ENCODE measurements at regions of chr10 and their contacts with region 1.

Region 1: GRCh38 chr10:88880282-88881076 is 434 bp downstream of the STAMBPL1 start:
- DNase-seq: peak; percentile 77
- ATAC-seq: peak; percentile 71
- H3K4me3 Mint-ChIP-seq: peak overlapping the region; percentile 96
- H3K27ac Mint-ChIP-seq: peak overlapping the region; percentile 99
- H3K4me1 Mint-ChIP-seq: peaks cover 52% of the 10 kb centered on the region
- H3K27me3 Mint-ChIP-seq: no peaks in the 10 kb centered on the region
- CTCF ChIP-seq: no peak

Region 2: GRCh38 chr10:88892222-88892967 is 11.9 kb after region 1 on chr10:
- CTCF ChIA-PET with region 1: interaction called, 5 read pairs
- POLR2A ChIA-PET with region 1: interaction called, 294 read pairs
- intact Hi-C with region 1: loop called (anchors 1 kb)
- DNase-seq: no peak
- ATAC-seq: no peak
- H3K4me3 Mint-ChIP-seq: no peak overlapping the region
- H3K27ac Mint-ChIP-seq: no peak overlapping the region
- H3K4me1 Mint-ChIP-seq: peaks cover 61% of the 10 kb centered on the region
- H3K27me3 Mint-ChIP-seq: no peaks in the 10 kb centered on the region
- CTCF ChIP-seq: no peak

Region 3: GRCh38 chr10:88926566-88927415 is 46.3 kb after region 1 on chr10:
- CTCF ChIA-PET with region 1: interaction called, 6 read pairs
- POLR2A ChIA-PET with region 1: interaction called, 33 read pairs
- intact Hi-C with region 1: loop called (anchors 2 kb)
- DNase-seq: no peak
- ATAC-seq: no peak
- H3K4me3 Mint-ChIP-seq: no peak overlapping the region
- H3K27ac Mint-ChIP-seq: no peak overlapping the region
- H3K4me1 Mint-ChIP-seq: peaks cover 5% of the 10 kb centered on the region
- H3K27me3 Mint-ChIP-seq: no peaks in the 10 kb centered on the region
- CTCF ChIP-seq: no peak

Region 4: DNA sequence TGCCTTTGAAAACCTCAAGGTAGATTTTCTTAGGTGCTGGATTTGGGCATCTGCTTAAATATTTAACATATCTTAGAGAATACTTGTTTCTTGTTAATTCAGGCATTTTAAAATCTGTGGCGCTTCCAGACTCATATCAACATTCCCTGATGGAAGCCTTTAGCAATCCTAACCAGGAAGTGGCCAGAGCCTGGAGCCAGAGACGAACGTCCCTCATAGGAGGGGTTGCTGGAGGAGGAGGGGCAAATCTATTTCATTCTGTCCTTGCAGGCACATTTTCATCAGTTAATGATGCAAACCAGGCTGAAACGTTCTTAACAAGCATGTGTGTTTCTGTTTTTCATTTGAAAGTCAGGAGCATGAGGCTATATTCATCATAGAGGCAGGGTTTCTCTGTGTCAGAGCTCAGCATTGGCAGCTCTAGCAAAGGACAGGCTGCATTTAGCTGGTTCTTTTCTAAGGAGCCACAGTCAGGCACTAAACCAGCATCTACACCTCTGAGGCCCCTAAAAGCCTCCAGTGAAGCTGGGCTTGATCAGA is 403.5 kb after region 1 on chr10:
- CTCF ChIA-PET with region 1: no interaction called
- POLR2A ChIA-PET with region 1: no interaction called
- intact Hi-C with region 1: no loop called
- DNase-seq: no peak
- ATAC-seq: no peak
- H3K4me3 Mint-ChIP-seq: no peak overlapping the region
- H3K27ac Mint-ChIP-seq: no peak overlapping the region
- H3K4me1 Mint-ChIP-seq: peaks cover 3% of the 10 kb centered on the region
- H3K27me3 Mint-ChIP-seq: peaks cover 5% of the 10 kb centered on the region
- CTCF ChIP-seq: no peak